Common myeloid progenitor, CD34-positive (primary cell): ENCODE measurements at regions of chr16 and their contacts with region 1.

Region 1: DNA sequence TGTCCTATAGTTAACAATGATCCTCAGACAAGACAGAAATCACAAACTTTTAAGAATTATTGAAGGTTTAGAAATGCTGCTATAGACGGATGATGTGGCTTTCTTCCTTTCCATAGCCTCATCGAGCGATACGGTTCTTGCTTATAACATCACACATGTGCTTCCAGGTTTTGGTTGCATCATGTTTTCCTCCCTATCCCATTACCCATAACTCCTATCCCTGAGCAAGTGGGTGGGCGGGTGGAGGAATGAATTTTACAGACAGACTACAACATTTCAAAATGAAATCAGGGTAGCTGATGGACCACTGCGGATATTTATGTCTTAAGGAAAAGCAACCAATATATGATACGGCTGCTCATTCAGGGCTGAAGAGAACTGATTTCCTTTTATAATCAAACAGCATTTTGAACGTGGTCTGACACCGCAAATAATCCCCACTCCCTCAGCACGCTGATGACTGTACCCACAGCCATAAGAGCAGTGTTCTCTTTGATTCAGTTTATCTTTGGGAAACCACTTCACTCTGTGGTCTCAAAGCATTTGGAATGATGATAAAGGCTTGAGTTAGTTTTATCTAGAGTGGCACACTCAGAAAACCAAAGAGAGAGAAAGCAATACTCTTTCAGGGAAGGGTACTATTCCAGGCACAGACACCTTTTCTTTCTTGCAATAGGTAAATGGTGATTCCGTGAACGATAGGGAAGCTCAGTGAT is 4.6 kb upstream of the AKTIP start:
- DNase-seq: peak; percentile 54 to 77 (median 66)
- H3K4me3 ChIP-seq: no peak overlapping the region
- H3K27ac ChIP-seq: no peak overlapping the region
- H3K4me1 ChIP-seq: peaks cover 0 to 18% (median 8%) of the 10 kb centered on the region in 4 experiments
- H3K27me3 ChIP-seq: peaks cover 0 to 25% (median 18%) of the 10 kb centered on the region in 5 experiments

Region 2: GRCh38 chr16:53518550-53519416 is 11.2 kb after region 1 on chr16:
- CTCF ChIA-PET with region 1: interaction called, 18 read pairs
- POLR2A ChIA-PET with region 1: no interaction called
- DNase-seq: peak; percentile 86 to 96 (median 94)
- H3K4me3 ChIP-seq: peak overlapping the region in 5 of 7 experiments; percentile 2 to 71 (median 21)
- H3K27ac ChIP-seq: no peak overlapping the region
- H3K4me1 ChIP-seq: peaks cover 18 to 25% (median 22%) of the 10 kb centered on the region in 4 experiments
- H3K27me3 ChIP-seq: peaks cover 0 to 75% (median 19%) of the 10 kb centered on the region in 5 experiments